BJ (cell line): ENCODE measurements at regions of chr20 and their contacts with region 1.

Region 1: DNA sequence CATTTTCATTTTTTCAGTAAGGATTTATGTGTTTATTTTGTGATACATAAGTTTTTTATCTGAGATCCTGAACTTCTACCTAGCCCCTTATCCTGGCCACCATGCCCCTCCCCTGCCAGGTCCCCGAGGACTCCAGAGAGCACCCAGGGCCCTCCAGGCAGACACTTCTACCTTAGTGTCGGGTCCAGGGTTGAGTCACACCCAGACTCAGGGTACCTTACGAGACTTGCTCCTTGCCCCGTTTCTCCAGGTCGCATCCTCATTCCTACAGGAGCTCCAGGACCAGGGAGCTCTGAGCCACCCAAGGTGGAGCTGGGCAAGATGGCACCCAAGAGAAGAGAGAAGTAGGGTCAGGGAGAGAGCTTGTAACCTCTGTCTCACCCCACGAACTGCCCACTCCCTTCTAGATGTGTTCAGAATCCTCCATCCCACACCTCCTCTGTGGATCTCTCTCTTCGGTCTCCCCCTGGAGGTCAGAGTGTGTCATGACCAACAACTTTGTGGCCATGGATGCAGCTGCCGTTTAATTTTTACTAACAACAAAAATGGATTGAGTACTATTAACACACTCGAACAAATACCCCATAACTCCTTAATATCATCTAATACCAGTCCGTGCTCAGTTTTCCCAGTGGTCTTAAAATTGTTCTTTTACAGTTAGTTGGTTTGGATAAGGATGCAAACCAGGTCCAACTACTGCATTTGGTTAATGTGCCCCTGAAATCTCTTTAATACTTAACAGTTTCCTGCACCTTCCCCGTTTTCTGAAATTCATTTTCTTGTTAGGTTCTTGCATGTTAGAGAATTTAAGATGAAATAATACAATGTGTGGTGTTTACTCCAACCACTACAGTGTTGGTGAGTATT is 130.6 kb upstream of the INSM1 start:
- DNase-seq: no peak
- H3K4me3 ChIP-seq: no peak overlapping the region
- H3K27me3 ChIP-seq: peaks cover 5% of the 10 kb centered on the region
- CTCF ChIP-seq: peak; percentile 81

Region 2: GRCh38 chr20:20083807-20084206 is 153.5 kb before region 1 on chr20:
- CTCF ChIA-PET with region 1: interaction called, 33 read pairs
- POLR2A ChIA-PET with region 1: no interaction called
- DNase-seq: no peak
- H3K4me3 ChIP-seq: no peak overlapping the region
- H3K27me3 ChIP-seq: peaks cover 6% of the 10 kb centered on the region
- CTCF ChIP-seq: peak; percentile 45

Region 3: DNA sequence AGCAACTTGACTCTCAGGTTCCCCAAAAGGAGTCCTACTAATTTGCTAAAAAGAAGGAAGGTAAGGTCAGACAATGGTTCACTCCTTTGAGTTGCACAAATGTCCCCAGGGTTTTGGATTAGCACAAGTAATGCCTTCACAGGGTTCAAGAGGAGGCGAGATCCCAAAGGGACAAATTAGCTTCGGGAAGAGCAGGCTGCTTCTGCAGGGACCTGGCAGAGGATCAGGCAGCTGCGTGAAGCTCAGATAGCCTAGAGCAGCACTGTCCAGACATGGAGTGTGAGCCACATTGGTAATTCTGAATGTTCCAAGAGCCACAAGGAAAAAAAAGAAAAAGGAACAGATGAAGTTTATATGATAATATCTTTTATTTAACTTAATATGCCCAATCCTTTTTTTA is 69.6 kb before region 1 on chr20:
- CTCF ChIA-PET with region 1: no interaction called
- POLR2A ChIA-PET with region 1: no interaction called
- DNase-seq: no peak
- H3K4me3 ChIP-seq: no peak overlapping the region
- H3K27me3 ChIP-seq: no peaks in the 10 kb centered on the region
- CTCF ChIP-seq: no peak

Region 4: DNA sequence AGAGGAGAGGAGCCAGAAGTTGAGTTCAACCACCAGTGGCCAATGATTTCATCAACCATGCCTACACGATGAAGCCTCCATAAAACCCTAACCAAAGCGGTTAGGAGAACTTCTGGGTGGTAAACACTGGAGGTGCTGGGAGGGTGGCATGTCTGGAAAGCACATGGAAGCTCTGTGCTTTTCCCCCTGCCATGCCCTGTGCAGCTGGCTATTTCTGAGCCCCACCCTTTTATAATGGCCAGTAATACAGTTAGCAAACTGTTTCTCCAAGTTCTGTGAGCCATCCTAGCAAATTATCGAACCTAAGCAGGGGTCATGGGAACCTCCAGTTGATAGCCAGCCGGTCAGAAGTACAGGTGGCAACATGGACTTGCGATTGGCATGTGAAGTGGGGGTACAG is 17.2 kb before region 1 on chr20:
- CTCF ChIA-PET with region 1: interaction called, 12 read pairs
- POLR2A ChIA-PET with region 1: no interaction called
- DNase-seq: no peak
- H3K4me3 ChIP-seq: no peak overlapping the region
- H3K27me3 ChIP-seq: peaks cover 1% of the 10 kb centered on the region; the same call in 1 of the 2 replicates
- CTCF ChIP-seq: no peak

Region 5: GRCh38 chr20:20248620-20249200 is 11.4 kb after region 1 on chr20:
- CTCF ChIA-PET with region 1: interaction called, 32 read pairs
- POLR2A ChIA-PET with region 1: no interaction called
- DNase-seq: no peak
- H3K4me3 ChIP-seq: no peak overlapping the region
- H3K27me3 ChIP-seq: no peaks in the 10 kb centered on the region; the same call in none of the 2 replicates
- CTCF ChIP-seq: no peak